Caco-2 (cell line): ENCODE measurements at regions of chr10 and their contacts with region 1.

Region 1: GRCh38 chr10:12264204-12264940 is 68.4 kb downstream of the CDC123 start:
- DNase-seq: peak; percentile 82 to 91
- H3K4me3 ChIP-seq: peak overlapping the region; percentile 39
- H3K4me3 Mint-ChIP-seq: peak overlapping the region; percentile 73
- H3K27ac Mint-ChIP-seq: peak overlapping the region; percentile 48
- H3K4me1 ChIP-seq: peaks cover 20% of the 10 kb centered on the region
- H3K4me1 Mint-ChIP-seq: peaks cover 18% of the 10 kb centered on the region
- H3K27me3 ChIP-seq: no peaks in the 10 kb centered on the region
- H3K27me3 Mint-ChIP-seq: no peaks in the 10 kb centered on the region
- CTCF ChIP-seq: peak; percentile 91 to 92

Region 2: GRCh38 chr10:12228851-12229250 is 35.5 kb before region 1 on chr10:
- CTCF ChIA-PET with region 1: no interaction called
- POLR2A ChIA-PET with region 1: no interaction called
- intact Hi-C with region 1: no loop called
- DNase-seq: no peak
- H3K4me3 ChIP-seq: no peak overlapping the region
- H3K4me3 Mint-ChIP-seq: no peak overlapping the region
- H3K27ac Mint-ChIP-seq: no peak overlapping the region
- H3K4me1 ChIP-seq: no peaks in the 10 kb centered on the region
- H3K4me1 Mint-ChIP-seq: no peaks in the 10 kb centered on the region
- H3K27me3 ChIP-seq: no peaks in the 10 kb centered on the region
- H3K27me3 Mint-ChIP-seq: no peaks in the 10 kb centered on the region
- CTCF ChIP-seq: no peak

Region 3: DNA sequence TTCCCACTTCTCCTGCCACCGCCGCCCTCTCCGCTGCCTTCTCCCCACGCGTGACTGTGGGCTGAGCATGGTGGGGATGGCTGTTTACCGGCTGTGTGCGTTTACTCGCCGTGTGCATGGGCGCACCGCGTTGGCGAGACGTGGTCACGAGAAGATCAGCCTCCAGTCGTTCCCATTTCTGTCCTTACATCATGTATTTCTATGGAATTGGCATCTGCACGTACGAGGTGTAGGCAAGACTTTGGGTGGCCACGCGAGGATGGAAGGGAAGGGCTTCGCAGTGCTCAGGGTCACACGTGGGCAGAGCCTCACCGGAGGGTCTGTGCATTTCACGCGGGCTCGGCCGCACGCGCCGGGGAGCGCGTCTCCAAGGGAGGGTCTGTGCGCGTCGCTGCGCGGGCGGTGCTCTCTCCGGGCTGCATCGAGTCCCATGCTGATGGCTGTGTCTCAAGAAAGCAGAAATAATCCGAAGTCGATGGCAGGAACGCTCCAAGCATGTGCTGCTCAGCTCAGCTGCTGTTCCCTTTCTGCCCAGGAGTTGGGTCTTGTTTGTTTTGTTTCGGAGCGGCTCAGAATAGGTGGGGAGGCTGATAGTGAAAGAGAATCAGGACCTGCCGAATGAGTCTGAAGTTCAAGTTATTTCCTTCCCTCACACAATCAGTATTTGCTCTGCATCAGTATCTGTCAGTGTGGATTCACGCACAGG is 85.9 kb after region 1 on chr10:
- CTCF ChIA-PET with region 1: interaction called, 4 read pairs
- POLR2A ChIA-PET with region 1: no interaction called
- intact Hi-C with region 1: loop called (anchors 2 kb)
- DNase-seq: peak; percentile 48 to 53
- H3K4me3 ChIP-seq: peak overlapping the region; percentile 67
- H3K4me3 Mint-ChIP-seq: peak overlapping the region; percentile 81
- H3K27ac Mint-ChIP-seq: no peak overlapping the region
- H3K4me1 ChIP-seq: peaks cover 18% of the 10 kb centered on the region
- H3K4me1 Mint-ChIP-seq: peaks cover 10% of the 10 kb centered on the region
- H3K27me3 ChIP-seq: 0 out of 2 replicates have a peak, but pooled peaks cover 2% of the 10 kb centered on the region
- H3K27me3 Mint-ChIP-seq: peaks cover 22% of the 10 kb centered on the region
- CTCF ChIP-seq: peak in 1 of 2 experiments; percentile 8

Region 4: DNA sequence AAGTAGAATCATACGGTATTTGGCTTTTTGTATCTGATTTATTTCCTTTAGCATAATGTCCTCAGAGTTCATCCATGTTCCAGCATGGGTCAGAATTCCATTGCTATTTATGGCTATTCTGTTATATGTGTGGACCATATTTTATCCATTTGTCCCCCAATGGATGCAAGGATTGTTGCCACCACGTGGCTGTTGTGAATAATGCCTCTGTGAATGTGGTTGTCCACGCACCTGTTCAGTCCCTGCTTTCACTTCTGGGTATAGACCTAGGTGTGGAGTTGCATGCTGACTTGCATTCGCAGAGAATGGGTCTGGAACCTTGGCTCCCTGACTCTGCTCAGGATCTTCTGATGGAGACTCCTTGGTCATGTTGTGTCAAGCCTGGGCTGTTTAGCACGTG is 284.9 kb after region 1 on chr10:
- CTCF ChIA-PET with region 1: no interaction called
- POLR2A ChIA-PET with region 1: no interaction called
- intact Hi-C with region 1: loop called (anchors 1 kb)
- DNase-seq: peak; percentile 31 to 40
- H3K4me3 ChIP-seq: no peak overlapping the region
- H3K4me3 Mint-ChIP-seq: no peak overlapping the region
- H3K27ac Mint-ChIP-seq: no peak overlapping the region
- H3K4me1 ChIP-seq: no peaks in the 10 kb centered on the region
- H3K4me1 Mint-ChIP-seq: peaks cover 8% of the 10 kb centered on the region
- H3K27me3 ChIP-seq: no peaks in the 10 kb centered on the region
- H3K27me3 Mint-ChIP-seq: no peaks in the 10 kb centered on the region
- CTCF ChIP-seq: peak; percentile 18 to 26

Region 5: GRCh38 chr10:13056456-13057077 is 792.2 kb after region 1 on chr10:
- CTCF ChIA-PET with region 1: no interaction called
- POLR2A ChIA-PET with region 1: no interaction called
- intact Hi-C with region 1: loop called (anchors 1 kb)
- DNase-seq: peak in 1 of 2 experiments; percentile 62
- H3K4me3 ChIP-seq: no peak overlapping the region
- H3K4me3 Mint-ChIP-seq: no peak overlapping the region
- H3K27ac Mint-ChIP-seq: no peak overlapping the region
- H3K4me1 ChIP-seq: no peaks in the 10 kb centered on the region
- H3K4me1 Mint-ChIP-seq: no peaks in the 10 kb centered on the region
- H3K27me3 ChIP-seq: no peaks in the 10 kb centered on the region
- H3K27me3 Mint-ChIP-seq: no peaks in the 10 kb centered on the region
- CTCF ChIP-seq: peak; percentile 64 to 88